Spleen (tissue), 13 donors: ENCODE measurements at regions of chr20 and their contacts with region 1.

Region 1: GRCh38 chr20:22691369-22692118 is 107.2 kb upstream of the FOXA2 start:
- DNase-seq: peak; percentile 91
- H3K4me3 ChIP-seq: peak overlapping the region in 1 of 8 donors; percentile 37
- H3K27ac ChIP-seq: peak overlapping the region in 4 of 8 donors; percentile 34 to 64 (median 52)
- H3K4me1 ChIP-seq: peaks cover 0 to 18% (median 9%) of the 10 kb centered on the region in 6 donors
- H3K27me3 ChIP-seq: peaks cover 0 to 8% (median 0%) of the 10 kb centered on the region in 7 donors
- CTCF ChIP-seq: peak; percentile 66 to 93 (median 88)
- POLR2A ChIP-seq: no peak

Region 2: DNA sequence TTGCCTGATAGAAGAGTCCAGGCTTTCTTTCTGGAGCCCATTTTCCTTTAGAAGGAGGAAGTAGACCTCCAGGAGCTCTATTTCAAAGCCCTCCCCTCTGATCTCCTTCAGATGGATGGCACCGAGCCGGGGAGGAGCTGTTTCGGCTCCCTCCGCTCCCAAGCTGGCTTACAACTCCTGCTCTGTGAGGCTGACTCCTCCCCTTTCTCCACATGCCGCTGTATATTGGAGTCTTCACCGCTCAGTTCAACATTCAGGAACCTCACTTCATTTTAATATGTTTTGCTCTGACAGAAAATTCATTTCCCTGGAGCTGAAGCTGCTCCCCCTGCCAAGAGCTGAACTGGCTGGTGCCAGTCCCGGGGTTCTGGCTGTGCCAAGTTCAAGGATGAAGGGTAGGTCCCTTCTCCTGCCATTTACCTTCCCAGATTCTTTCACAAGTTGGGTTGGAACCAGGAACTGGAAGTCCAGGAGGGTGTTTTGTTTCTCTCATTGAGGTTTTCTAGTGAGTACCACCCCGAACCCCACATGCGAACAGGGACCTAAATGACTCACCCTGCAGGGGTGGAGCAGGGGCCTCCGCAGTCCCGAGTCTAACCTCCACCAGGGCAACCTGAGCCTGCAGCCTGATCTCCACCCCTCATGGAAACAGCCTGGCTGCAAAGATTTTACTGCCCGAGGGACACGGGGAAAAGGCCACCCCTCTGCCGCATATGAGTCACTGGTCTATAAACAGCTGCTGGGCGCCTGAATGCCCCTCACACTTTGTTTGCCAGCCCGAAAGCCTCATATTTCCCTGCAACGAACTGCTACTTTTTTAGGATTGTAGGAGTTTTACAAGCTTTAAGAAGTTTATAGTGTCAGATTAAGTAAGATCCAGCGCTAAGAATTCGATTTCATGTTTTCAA is 38.6 kb before region 1 on chr20:
- intact Hi-C with region 1: no loop called
- DNase-seq: no peak
- H3K4me3 ChIP-seq: no peak overlapping the region
- H3K27ac ChIP-seq: no peak overlapping the region
- H3K4me1 ChIP-seq: no peaks in the 10 kb centered on the region
- H3K27me3 ChIP-seq: peaks cover 0 to 13% (median 5%) of the 10 kb centered on the region in 7 donors
- CTCF ChIP-seq: no peak
- POLR2A ChIP-seq: no peak

Region 3: GRCh38 chr20:23050847-23051631 is 359.5 kb after region 1 on chr20:
- intact Hi-C with region 1: loop called (anchors 5 kb)
- DNase-seq: peak; percentile 91
- H3K4me3 ChIP-seq: peak overlapping the region; percentile 42 to 77 (median 57)
- H3K27ac ChIP-seq: peak overlapping the region; percentile 88 to 96 (median 91)
- H3K4me1 ChIP-seq: peaks cover 0 to 58% (median 39%) of the 10 kb centered on the region in 6 donors
- H3K27me3 ChIP-seq: peaks cover 0 to 79% (median 29%) of the 10 kb centered on the region in 7 donors
- CTCF ChIP-seq: peak; percentile 16 to 83 (median 68)
- POLR2A ChIP-seq: peak in 1 of 3 donors; percentile 19

Region 4: DNA sequence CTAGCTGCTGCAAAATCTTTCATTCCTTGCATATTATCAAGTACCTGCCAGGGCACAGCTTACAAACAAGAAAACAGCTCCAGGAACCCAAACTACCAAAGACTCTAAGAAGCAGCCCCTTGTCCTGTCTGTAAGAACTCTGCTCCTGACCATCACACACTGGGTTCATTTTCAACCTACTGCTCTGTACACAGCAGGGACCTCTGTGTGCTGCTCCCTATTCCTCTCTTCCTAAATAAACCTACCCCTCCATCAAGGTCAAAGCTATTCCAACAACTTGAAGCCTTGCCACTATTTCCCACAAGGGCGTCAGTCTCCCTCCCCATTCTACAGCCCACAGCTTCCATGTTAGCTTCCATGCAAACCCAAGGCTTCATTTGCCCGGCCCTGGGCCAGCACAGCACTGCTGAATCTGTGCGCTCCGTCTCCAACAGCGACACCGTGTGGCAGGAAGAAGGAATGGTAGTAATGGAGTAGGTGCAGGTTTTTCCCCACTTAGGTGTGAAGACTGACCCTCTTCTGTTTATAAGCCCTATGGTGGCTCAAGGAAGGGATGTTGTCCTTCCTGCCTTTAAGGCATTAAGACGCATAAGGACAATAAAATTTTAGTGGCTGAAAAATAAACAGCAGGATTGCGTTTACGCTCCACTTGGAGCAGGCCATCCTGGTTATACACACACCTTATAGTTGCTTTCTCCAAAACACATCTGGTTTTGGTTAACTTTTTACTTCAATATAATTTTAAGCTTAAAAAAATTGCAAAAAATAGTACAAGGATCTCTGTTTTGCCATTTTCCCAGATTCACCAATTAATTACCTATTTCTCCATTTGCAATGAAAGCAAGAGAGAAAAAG is 543.9 kb after region 1 on chr20:
- intact Hi-C with region 1: loop called (anchors 10 kb)
- DNase-seq: peak; percentile 89
- H3K4me3 ChIP-seq: no peak overlapping the region
- H3K27ac ChIP-seq: no peak overlapping the region
- H3K4me1 ChIP-seq: peaks cover 0 to 3% (median 0%) of the 10 kb centered on the region in 6 donors
- H3K27me3 ChIP-seq: peaks cover 0 to 4% (median 0%) of the 10 kb centered on the region in 7 donors
- CTCF ChIP-seq: peak; percentile 49 to 88 (median 72)
- POLR2A ChIP-seq: no peak

Region 5: DNA sequence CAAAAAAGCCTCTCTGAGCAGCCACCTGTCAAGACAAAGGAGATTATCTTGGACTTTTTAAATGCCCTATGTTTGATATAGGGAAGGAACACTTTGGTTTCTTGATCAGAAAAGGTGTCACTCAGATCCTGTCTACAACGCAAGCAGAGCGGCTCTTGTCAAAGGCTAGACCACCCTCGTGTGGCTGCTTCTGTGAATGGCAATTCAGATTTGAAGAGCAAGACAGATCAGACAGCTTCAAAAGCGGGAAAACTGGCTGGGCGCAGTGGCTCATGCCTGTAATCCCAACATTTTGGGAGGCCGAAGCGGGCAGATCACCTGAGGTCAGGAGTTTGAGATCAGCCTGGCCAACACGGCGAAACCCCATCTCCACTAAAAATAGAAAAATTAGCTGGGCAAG is 649.0 kb after region 1 on chr20:
- intact Hi-C with region 1: loop called (anchors 5 kb)
- DNase-seq: no peak
- H3K4me3 ChIP-seq: no peak overlapping the region
- H3K27ac ChIP-seq: no peak overlapping the region
- H3K4me1 ChIP-seq: peaks cover 0 to 6% (median 0%) of the 10 kb centered on the region in 6 donors
- H3K27me3 ChIP-seq: no peaks in the 10 kb centered on the region
- CTCF ChIP-seq: peak; percentile 17 to 68 (median 60)
- POLR2A ChIP-seq: no peak